Ovary (tissue), 10 donors: ENCODE measurements at regions of chr2 and their contacts with region 1.

Region 1: GRCh38 chr2:181104512-181105115 is 124.2 kb downstream of the UBE2E3 start:
- DNase-seq: no peak
- H3K4me3 ChIP-seq: no peak overlapping the region
- H3K27ac ChIP-seq: no peak overlapping the region
- H3K4me1 ChIP-seq: no peaks in the 10 kb centered on the region
- H3K27me3 ChIP-seq: no peaks in the 10 kb centered on the region
- CTCF ChIP-seq: peak in 1 of 3 donors; percentile 23
- EP300 ChIP-seq: no peak
- POLR2A ChIP-seq: no peak

Region 2: DNA sequence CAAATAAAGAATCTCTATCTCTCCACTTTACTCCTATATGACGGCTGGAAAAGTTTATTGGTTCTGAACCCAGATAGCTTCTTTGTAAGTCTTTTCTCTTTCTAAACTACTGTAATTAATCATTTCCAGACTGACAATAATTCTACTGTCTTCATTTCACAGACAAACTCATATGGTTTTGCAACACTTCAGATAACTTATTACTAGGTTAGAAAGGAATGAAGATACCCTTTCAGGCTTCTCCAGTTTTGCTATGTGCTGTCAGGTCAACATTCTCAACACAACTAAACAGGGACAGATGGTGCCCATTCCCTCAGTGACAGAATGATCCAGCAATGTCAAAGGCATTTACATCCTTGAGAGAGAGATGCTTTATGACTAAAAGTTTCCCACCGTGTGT is 154.1 kb after region 1 on chr2:
- intact Hi-C with region 1: no loop called
- DNase-seq: no peak
- H3K4me3 ChIP-seq: no peak overlapping the region
- H3K27ac ChIP-seq: no peak overlapping the region
- H3K4me1 ChIP-seq: no peaks in the 10 kb centered on the region
- H3K27me3 ChIP-seq: no peaks in the 10 kb centered on the region
- CTCF ChIP-seq: no peak
- EP300 ChIP-seq: no peak
- POLR2A ChIP-seq: no peak

Region 3: DNA sequence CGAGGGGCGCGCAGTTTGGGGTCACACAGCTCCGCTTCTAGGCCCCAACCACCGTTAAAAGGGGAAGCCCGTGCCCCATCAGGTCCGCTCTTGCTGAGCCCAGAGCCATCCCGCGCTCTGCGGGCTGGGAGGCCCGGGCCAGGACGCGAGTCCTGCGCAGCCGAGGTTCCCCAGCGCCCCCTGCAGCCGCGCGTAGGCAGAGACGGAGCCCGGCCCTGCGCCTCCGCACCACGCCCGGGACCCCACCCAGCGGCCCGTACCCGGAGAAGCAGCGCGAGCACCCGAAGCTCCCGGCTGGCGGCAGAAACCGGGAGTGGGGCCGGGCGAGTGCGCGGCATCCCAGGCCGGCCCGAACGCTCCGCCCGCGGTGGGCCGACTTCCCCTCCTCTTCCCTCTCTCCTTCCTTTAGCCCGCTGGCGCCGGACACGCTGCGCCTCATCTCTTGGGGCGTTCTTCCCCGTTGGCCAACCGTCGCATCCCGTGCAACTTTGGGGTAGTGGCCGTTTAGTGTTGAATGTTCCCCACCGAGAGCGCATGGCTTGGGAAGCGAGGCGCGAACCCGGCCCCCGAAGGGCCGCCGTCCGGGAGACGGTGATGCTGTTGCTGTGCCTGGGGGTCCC is 352.6 kb after region 1 on chr2 and contains the start of gene ITGA4:
- intact Hi-C with region 1: loop called in 1 of 4 experiments (anchors 10 kb)
- DNase-seq: peak; percentile 15 to 71 (median 25)
- H3K4me3 ChIP-seq: peak within 1 kb of the TSS; percentile 36
- H3K27ac ChIP-seq: no peak within 1 kb of the TSS
- H3K4me1 ChIP-seq: peaks cover 4% of the 10 kb centered on the region
- H3K27me3 ChIP-seq: no peaks in the 10 kb centered on the region
- CTCF ChIP-seq: peak in 1 of 3 donors; percentile 36
- EP300 ChIP-seq: no peak
- POLR2A ChIP-seq: no peak
- total RNA-seq, gene ITGA4: 1.0 to 7.2 (median 2.1) TPM